ENCODE measurements at regions of chr2 and their contacts with region 1.

Region 1: GRCh38 chr2:24164125-24164973 is 10.5 kb upstream of the FAM228A start:
- DNase-seq: peak; percentile 54
- H3K4me3 Mint-ChIP-seq: no peak overlapping the region
- H3K27ac Mint-ChIP-seq: no peak overlapping the region
- H3K4me1 Mint-ChIP-seq: no peaks in the 10 kb centered on the region
- H3K27me3 Mint-ChIP-seq: no peaks in the 10 kb centered on the region

Region 2: GRCh38 chr2:23720705-23721453 is 443.5 kb before region 1 on chr2:
- CTCF ChIA-PET with region 1: no interaction called
- intact Hi-C with region 1: no loop called
- DNase-seq: no peak
- H3K4me3 Mint-ChIP-seq: no peak overlapping the region
- H3K27ac Mint-ChIP-seq: no peak overlapping the region
- H3K4me1 Mint-ChIP-seq: no peaks in the 10 kb centered on the region
- H3K27me3 Mint-ChIP-seq: no peaks in the 10 kb centered on the region

Region 3: GRCh38 chr2:23824777-23825212 is 339.6 kb before region 1 on chr2:
- CTCF ChIA-PET with region 1: interaction called, 11 read pairs
- intact Hi-C with region 1: loop called (anchors 2 kb)
- DNase-seq: peak; percentile 41
- H3K4me3 Mint-ChIP-seq: no peak overlapping the region
- H3K27ac Mint-ChIP-seq: no peak overlapping the region
- H3K4me1 Mint-ChIP-seq: peaks cover 5% of the 10 kb centered on the region
- H3K27me3 Mint-ChIP-seq: no peaks in the 10 kb centered on the region

Region 4: GRCh38 chr2:23988371-23988770 is 176.0 kb before region 1 on chr2:
- CTCF ChIA-PET with region 1: no interaction called
- intact Hi-C with region 1: loop called (anchors 1 kb)
- DNase-seq: no peak
- H3K4me3 Mint-ChIP-seq: no peak overlapping the region
- H3K27ac Mint-ChIP-seq: no peak overlapping the region
- H3K4me1 Mint-ChIP-seq: no peaks in the 10 kb centered on the region
- H3K27me3 Mint-ChIP-seq: no peaks in the 10 kb centered on the region

Region 5: GRCh38 chr2:24021193-24021998 is 143.0 kb before region 1 on chr2:
- CTCF ChIA-PET with region 1: no interaction called
- intact Hi-C with region 1: loop called (anchors 2 kb)
- DNase-seq: peak; percentile 44
- H3K4me3 Mint-ChIP-seq: no peak overlapping the region
- H3K27ac Mint-ChIP-seq: no peak overlapping the region
- H3K4me1 Mint-ChIP-seq: no peaks in the 10 kb centered on the region
- H3K27me3 Mint-ChIP-seq: no peaks in the 10 kb centered on the region

Measured in activated naive CD4-positive, alpha-beta T cell treated with anti-CD3 and anti-CD28 coated beads for 36 hours (primary cell).